CD8-positive, alpha-beta T cell (primary cell): ENCODE measurements at regions of chr2 and their contacts with region 1.

Region 1: GRCh38 chr2:32135409-32135808 is 30.3 kb upstream of the SLC30A6 start:
- DNase-seq: peak in 2 of 9 experiments; percentile 16 to 38
- ATAC-seq: no peak
- H3K4me3 ChIP-seq: no peak overlapping the region
- H3K4me3 Mint-ChIP-seq: no peak overlapping the region
- H3K27ac ChIP-seq: no peak overlapping the region
- H3K27ac Mint-ChIP-seq: no peak overlapping the region
- H3K4me1 ChIP-seq: no peaks in the 10 kb centered on the region
- H3K4me1 Mint-ChIP-seq: no peaks in the 10 kb centered on the region
- H3K27me3 ChIP-seq: no peaks in the 10 kb centered on the region
- H3K27me3 Mint-ChIP-seq: no peaks in the 10 kb centered on the region
- CTCF ChIP-seq: peak; percentile 15

Region 2: GRCh38 chr2:31886697-31887096 is 248.7 kb before region 1 on chr2:
- CTCF ChIA-PET with region 1: no interaction called
- POLR2A ChIA-PET with region 1: no interaction called
- intact Hi-C with region 1: loop called in 1 of 2 experiments (anchors 10 kb)
- DNase-seq: peak in 2 of 9 experiments; percentile 4 to 33
- ATAC-seq: no peak
- H3K4me3 ChIP-seq: no peak overlapping the region
- H3K4me3 Mint-ChIP-seq: no peak overlapping the region
- H3K27ac ChIP-seq: no peak overlapping the region
- H3K27ac Mint-ChIP-seq: no peak overlapping the region
- H3K4me1 ChIP-seq: no peaks in the 10 kb centered on the region
- H3K4me1 Mint-ChIP-seq: no peaks in the 10 kb centered on the region
- H3K27me3 ChIP-seq: no peaks in the 10 kb centered on the region
- H3K27me3 Mint-ChIP-seq: no peaks in the 10 kb centered on the region
- CTCF ChIP-seq: no peak

Region 3: GRCh38 chr2:32118055-32118454 is 17.4 kb before region 1 on chr2:
- CTCF ChIA-PET with region 1: no interaction called
- POLR2A ChIA-PET with region 1: no interaction called
- intact Hi-C with region 1: no loop called
- DNase-seq: no peak
- ATAC-seq: no peak
- H3K4me3 ChIP-seq: no peak overlapping the region
- H3K4me3 Mint-ChIP-seq: no peak overlapping the region
- H3K27ac ChIP-seq: no peak overlapping the region
- H3K27ac Mint-ChIP-seq: no peak overlapping the region
- H3K4me1 ChIP-seq: no peaks in the 10 kb centered on the region
- H3K4me1 Mint-ChIP-seq: no peaks in the 10 kb centered on the region
- H3K27me3 ChIP-seq: no peaks in the 10 kb centered on the region
- H3K27me3 Mint-ChIP-seq: no peaks in the 10 kb centered on the region
- CTCF ChIP-seq: no peak